ENCODE measurements at regions of chr12 and their contacts with region 1.

Region 1: DNA sequence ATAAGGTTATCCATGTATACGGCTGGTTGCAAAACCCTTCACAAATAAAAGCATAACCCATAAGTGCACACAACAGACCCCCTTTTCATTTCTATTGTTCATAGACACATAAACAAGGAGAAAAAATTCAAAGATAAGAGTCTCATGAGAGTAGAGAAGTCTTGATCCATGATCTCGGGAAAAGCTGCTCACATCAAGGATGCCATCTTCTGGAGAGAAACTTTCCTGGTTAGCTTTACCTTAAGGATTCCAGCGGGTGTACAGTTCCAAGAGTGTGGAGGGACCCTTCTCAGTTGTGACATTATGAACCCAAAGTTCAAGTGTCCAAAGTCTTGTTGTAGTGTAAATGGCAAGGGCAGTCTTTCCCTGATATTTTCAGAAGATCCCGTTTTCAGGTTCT is 144.5 kb downstream of the LLPH start:
- DNase-seq: no peak
- ATAC-seq: no peak
- H3K4me3 ChIP-seq: no peak overlapping the region
- H3K4me3 Mint-ChIP-seq: no peak overlapping the region
- H3K27ac ChIP-seq: no peak overlapping the region
- H3K27ac Mint-ChIP-seq: no peak overlapping the region
- H3K4me1 ChIP-seq: no peaks in the 10 kb centered on the region
- H3K4me1 Mint-ChIP-seq: no peaks in the 10 kb centered on the region
- H3K27me3 ChIP-seq: no peaks in the 10 kb centered on the region
- H3K27me3 Mint-ChIP-seq: peaks cover 4 to 16% of the 10 kb centered on the region in 2 donors
- CTCF ChIP-seq: no peak

Region 2: GRCh38 chr12:65415826-65416225 is 570.2 kb before region 1 on chr12:
- intact Hi-C with region 1: no loop called
- DNase-seq: no peak
- ATAC-seq: no peak
- H3K4me3 ChIP-seq: no peak overlapping the region
- H3K4me3 Mint-ChIP-seq: no peak overlapping the region
- H3K27ac ChIP-seq: no peak overlapping the region
- H3K27ac Mint-ChIP-seq: no peak overlapping the region
- H3K4me1 ChIP-seq: no peaks in the 10 kb centered on the region
- H3K4me1 Mint-ChIP-seq: peaks cover 7 to 9% of the 10 kb centered on the region in 2 donors
- H3K27me3 ChIP-seq: no peaks in the 10 kb centered on the region
- H3K27me3 Mint-ChIP-seq: no peaks in the 10 kb centered on the region
- CTCF ChIP-seq: no peak

Region 3: DNA sequence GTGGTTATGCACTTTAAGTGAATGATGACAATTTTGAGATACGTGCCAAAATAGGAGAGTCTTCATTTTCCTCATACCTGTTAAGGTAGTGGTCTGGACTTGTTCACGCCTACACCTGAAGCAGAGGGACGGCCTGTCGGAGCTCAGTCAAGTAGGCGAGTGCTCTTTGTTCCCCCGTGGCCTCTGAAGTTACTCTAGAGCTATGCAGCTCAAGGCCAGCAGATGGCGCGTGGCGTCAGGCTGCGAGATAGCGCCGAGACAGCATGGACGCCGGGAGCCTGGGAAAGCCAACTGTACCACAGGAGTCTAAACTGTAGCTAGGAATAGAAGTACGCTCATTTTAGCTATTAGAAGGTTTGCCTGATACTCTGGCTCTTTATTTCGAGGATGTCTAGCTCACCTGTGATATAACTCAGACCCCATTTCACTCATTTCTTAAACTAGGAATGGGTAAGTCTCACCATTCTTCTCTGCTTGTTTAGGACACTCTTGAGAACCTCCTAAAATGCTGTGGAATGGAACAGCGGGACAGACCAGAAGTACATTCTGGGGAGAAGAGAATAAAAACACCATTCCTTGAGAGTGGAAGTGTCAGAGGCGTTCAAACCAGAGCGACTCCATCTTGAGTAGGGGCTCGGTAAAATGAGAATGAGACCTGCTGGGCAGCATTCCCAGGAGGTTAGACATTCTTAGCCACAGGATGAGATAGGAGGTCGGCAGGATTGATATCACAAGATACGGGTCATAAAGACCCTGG is 429.2 kb before region 1 on chr12:
- intact Hi-C with region 1: loop called (anchors 1 kb)
- DNase-seq: peak; percentile 52 to 71
- ATAC-seq: peak; percentile 82 to 98 (median 85)
- H3K4me3 ChIP-seq: no peak overlapping the region
- H3K4me3 Mint-ChIP-seq: no peak overlapping the region
- H3K27ac ChIP-seq: no peak overlapping the region
- H3K27ac Mint-ChIP-seq: no peak overlapping the region
- H3K4me1 ChIP-seq: no peaks in the 10 kb centered on the region
- H3K4me1 Mint-ChIP-seq: peaks cover 0 to 7% of the 10 kb centered on the region in 2 donors
- H3K27me3 ChIP-seq: peaks cover 2% of the 10 kb centered on the region
- H3K27me3 Mint-ChIP-seq: peaks cover 5 to 21% of the 10 kb centered on the region in 2 donors
- CTCF ChIP-seq: peak; percentile 77

Region 4: DNA sequence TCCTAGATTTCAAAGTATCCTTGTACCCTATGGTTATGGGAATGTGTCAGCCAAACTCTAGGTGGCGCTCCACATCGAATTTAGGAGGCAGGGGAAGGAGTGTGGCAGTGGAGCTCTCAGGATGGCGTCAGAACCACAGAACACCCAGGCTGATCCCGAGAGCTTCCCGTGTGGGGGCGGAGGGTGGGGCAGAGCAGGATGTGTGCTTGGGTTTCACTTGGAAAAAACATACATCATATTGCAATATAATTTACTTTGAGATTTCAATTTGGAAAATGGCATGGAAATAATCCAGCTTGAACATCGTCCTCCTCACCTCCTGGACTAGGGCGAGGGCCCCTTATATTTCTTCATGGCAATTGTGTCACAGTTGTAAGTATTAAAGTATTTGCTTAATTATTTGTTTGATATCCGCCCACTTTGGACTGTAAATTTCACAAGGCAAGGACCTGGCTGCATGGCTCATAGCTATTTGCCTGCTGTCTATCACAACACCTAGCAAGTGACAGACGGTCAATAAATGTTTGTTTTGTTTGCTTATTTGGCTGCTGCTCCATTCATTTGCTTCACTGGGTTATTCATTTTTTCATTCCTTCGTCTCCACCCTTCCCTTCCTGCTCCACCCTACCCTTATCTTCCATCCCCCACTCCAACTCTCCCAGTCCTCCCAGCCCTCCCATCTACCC is 383.3 kb before region 1 on chr12:
- intact Hi-C with region 1: loop called (anchors 1 kb)
- DNase-seq: peak; percentile 15 to 19
- ATAC-seq: peak in 1 of 3 donors; percentile 74
- H3K4me3 ChIP-seq: no peak overlapping the region
- H3K4me3 Mint-ChIP-seq: no peak overlapping the region
- H3K27ac ChIP-seq: no peak overlapping the region
- H3K27ac Mint-ChIP-seq: no peak overlapping the region
- H3K4me1 ChIP-seq: no peaks in the 10 kb centered on the region
- H3K4me1 Mint-ChIP-seq: no peaks in the 10 kb centered on the region
- H3K27me3 ChIP-seq: peaks cover 2% of the 10 kb centered on the region
- H3K27me3 Mint-ChIP-seq: peaks cover 18 to 24% of the 10 kb centered on the region in 2 donors
- CTCF ChIP-seq: peak; percentile 27

Region 5: GRCh38 chr12:65823513-65824375 is 162.3 kb before region 1 on chr12:
- intact Hi-C with region 1: loop called (anchors 2 kb)
- DNase-seq: peak; percentile 2 to 15
- ATAC-seq: peak; percentile 14 to 42 (median 40)
- H3K4me3 ChIP-seq: peak overlapping the region; percentile 13
- H3K4me3 Mint-ChIP-seq: peak overlapping the region; percentile 90
- H3K27ac ChIP-seq: no peak overlapping the region
- H3K27ac Mint-ChIP-seq: peak overlapping the region; percentile 64 to 65
- H3K4me1 ChIP-seq: peaks cover 35% of the 10 kb centered on the region
- H3K4me1 Mint-ChIP-seq: peaks cover 22 to 35% of the 10 kb centered on the region in 2 donors
- H3K27me3 ChIP-seq: peaks cover 34% of the 10 kb centered on the region
- H3K27me3 Mint-ChIP-seq: peaks cover 55 to 60% of the 10 kb centered on the region in 2 donors
- CTCF ChIP-seq: no peak

Region 6: GRCh38 chr12:65891987-65892481 is 94.0 kb before region 1 on chr12:
- intact Hi-C with region 1: loop called (anchors 5 kb)
- DNase-seq: no peak
- ATAC-seq: no peak
- H3K4me3 ChIP-seq: no peak overlapping the region
- H3K4me3 Mint-ChIP-seq: no peak overlapping the region
- H3K27ac ChIP-seq: no peak overlapping the region
- H3K27ac Mint-ChIP-seq: no peak overlapping the region
- H3K4me1 ChIP-seq: peaks cover 11% of the 10 kb centered on the region
- H3K4me1 Mint-ChIP-seq: peaks cover 15 to 20% of the 10 kb centered on the region in 2 donors
- H3K27me3 ChIP-seq: no peaks in the 10 kb centered on the region
- H3K27me3 Mint-ChIP-seq: peaks cover 12 to 16% of the 10 kb centered on the region in 2 donors
- CTCF ChIP-seq: no peak

Measured in natural killer cell (primary cell).